Psoas muscle (tissue), 8 donors: ENCODE measurements at regions of chr2 and their contacts with region 1.

Region 1: GRCh38 chr2:160994141-160995002 is 165.9 kb upstream of the TANK start:
- DNase-seq: peak; percentile 32 to 62
- ATAC-seq: peak; percentile 90 to 96 (median 93)
- H3K4me3 ChIP-seq: peak overlapping the region; percentile 13
- H3K27ac ChIP-seq: peak overlapping the region; percentile 61
- H3K4me1 ChIP-seq: peaks cover 6% of the 10 kb centered on the region
- H3K27me3 ChIP-seq: no peaks in the 10 kb centered on the region
- CTCF ChIP-seq: peak; percentile 94

Region 2: DNA sequence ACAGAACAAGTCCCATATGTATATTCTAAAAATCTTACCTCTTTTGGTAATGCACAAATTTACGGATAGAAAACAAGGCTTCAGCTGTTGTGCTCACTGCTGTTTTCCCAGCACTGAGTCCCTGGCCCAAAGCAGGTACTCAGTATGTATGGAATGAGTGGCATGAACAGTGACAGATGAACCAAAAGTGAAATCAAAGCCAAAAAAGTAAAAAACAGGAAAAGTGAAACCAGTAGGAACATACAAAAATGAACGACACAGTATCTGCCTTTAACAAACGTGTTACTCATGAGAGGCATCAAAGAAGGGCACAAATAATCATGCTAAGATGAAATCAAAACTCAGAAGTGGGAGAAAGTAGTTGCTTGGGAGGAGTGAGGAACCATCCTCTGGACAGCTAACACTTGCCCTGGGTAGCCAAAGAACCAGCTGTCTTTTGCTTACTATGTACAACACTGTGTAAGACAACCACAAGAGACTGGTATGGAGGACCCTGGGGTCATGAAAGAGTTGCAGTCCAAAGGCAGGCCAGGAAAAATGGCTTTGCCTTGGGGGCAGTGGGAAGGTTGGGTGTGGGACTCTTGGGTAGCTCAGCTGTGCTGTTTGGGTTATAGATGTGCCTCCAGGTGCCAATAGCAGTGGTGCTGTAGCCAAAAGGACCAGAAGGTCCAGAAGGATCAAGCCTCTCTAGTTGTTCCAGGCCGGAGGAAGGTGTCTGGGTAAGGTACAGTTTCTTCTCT is 892.2 kb before region 1 on chr2:
- intact Hi-C with region 1: loop called (anchors 5 kb)
- DNase-seq: no peak
- ATAC-seq: no peak
- H3K4me3 ChIP-seq: no peak overlapping the region
- H3K27ac ChIP-seq: no peak overlapping the region
- H3K4me1 ChIP-seq: no peaks in the 10 kb centered on the region
- H3K27me3 ChIP-seq: no peaks in the 10 kb centered on the region
- CTCF ChIP-seq: no peak

Region 3: GRCh38 chr2:160109936-160110673 is 884.3 kb before region 1 on chr2:
- intact Hi-C with region 1: loop called in 1 of 2 experiments (anchors 5 kb)
- DNase-seq: peak; percentile 45 to 70
- ATAC-seq: peak; percentile 89 to 98 (median 94)
- H3K4me3 ChIP-seq: no peak overlapping the region
- H3K27ac ChIP-seq: no peak overlapping the region
- H3K4me1 ChIP-seq: peaks cover 4% of the 10 kb centered on the region
- H3K27me3 ChIP-seq: no peaks in the 10 kb centered on the region
- CTCF ChIP-seq: peak; percentile 87